ENCODE measurements at regions of chr12 and their contacts with region 1.

Region 1: GRCh38 chr12:104958009-104958945 is at the start of gene SLC41A2:
- DNase-seq: peak; percentile 81
- H3K4me3 ChIP-seq: peak within 1 kb of the TSS; percentile 72 to 89 (median 78)
- H3K27ac ChIP-seq: peak within 1 kb of the TSS; percentile 72
- H3K4me1 ChIP-seq: peaks cover 21% of the 10 kb centered on the region
- H3K27me3 ChIP-seq: peaks cover 0 to 5% of the 10 kb centered on the region in 2 experiments
- CTCF ChIP-seq: no peak
- POLR2A ChIP-seq: peak; percentile 51
- total RNA-seq, gene SLC41A2: 7.5 and 8.0 TPM in 2 replicates

Region 2: GRCh38 chr12:104371043-104371870 is 587.0 kb before region 1 on chr12:
- CTCF ChIA-PET with region 1: no interaction called
- POLR2A ChIA-PET with region 1: no interaction called
- dilution Hi-C with region 1: no loop called
- intact Hi-C with region 1: loop called (anchors 5 kb)
- DNase-seq: peak; percentile 62
- H3K4me3 ChIP-seq: no peak overlapping the region
- H3K27ac ChIP-seq: peak overlapping the region; percentile 73
- H3K4me1 ChIP-seq: peaks cover 20% of the 10 kb centered on the region
- H3K27me3 ChIP-seq: no peaks in the 10 kb centered on the region
- CTCF ChIP-seq: no peak
- POLR2A ChIP-seq: peak; percentile 41

Region 3: DNA sequence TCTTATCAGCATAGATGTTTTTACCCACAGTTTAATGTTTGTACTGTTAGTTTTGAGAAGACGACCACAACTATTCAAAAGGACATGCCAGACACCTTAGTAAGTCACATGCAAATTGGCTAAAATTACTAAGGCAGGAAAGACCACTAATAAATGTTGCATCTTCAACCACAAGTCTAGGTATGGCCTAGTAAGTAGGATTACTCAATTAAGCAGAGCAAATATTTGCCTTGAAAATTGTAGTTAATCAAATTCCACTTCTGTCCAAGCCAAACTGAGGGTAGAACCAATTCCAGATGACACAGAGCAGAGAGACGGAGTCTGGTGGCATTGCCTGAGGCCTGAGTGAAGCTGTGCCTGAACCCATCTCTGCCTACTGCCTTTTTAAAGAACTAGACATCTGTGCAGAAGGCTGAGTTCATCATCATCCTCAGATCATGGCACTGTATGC is 531.2 kb before region 1 on chr12:
- CTCF ChIA-PET with region 1: no interaction called
- POLR2A ChIA-PET with region 1: no interaction called
- dilution Hi-C with region 1: no loop called
- intact Hi-C with region 1: no loop called
- DNase-seq: no peak
- H3K4me3 ChIP-seq: no peak overlapping the region
- H3K27ac ChIP-seq: no peak overlapping the region
- H3K4me1 ChIP-seq: no peaks in the 10 kb centered on the region
- H3K27me3 ChIP-seq: no peaks in the 10 kb centered on the region
- CTCF ChIP-seq: no peak
- POLR2A ChIP-seq: no peak

Region 4: GRCh38 chr12:104695453-104696148 is 262.7 kb before region 1 on chr12:
- CTCF ChIA-PET with region 1: no interaction called
- POLR2A ChIA-PET with region 1: no interaction called
- dilution Hi-C with region 1: no loop called
- intact Hi-C with region 1: no loop called
- DNase-seq: peak; percentile 65
- H3K4me3 ChIP-seq: no peak overlapping the region
- H3K27ac ChIP-seq: peak overlapping the region; percentile 15
- H3K4me1 ChIP-seq: peaks cover 10% of the 10 kb centered on the region
- H3K27me3 ChIP-seq: no peaks in the 10 kb centered on the region
- CTCF ChIP-seq: no peak
- POLR2A ChIP-seq: no peak

Region 5: DNA sequence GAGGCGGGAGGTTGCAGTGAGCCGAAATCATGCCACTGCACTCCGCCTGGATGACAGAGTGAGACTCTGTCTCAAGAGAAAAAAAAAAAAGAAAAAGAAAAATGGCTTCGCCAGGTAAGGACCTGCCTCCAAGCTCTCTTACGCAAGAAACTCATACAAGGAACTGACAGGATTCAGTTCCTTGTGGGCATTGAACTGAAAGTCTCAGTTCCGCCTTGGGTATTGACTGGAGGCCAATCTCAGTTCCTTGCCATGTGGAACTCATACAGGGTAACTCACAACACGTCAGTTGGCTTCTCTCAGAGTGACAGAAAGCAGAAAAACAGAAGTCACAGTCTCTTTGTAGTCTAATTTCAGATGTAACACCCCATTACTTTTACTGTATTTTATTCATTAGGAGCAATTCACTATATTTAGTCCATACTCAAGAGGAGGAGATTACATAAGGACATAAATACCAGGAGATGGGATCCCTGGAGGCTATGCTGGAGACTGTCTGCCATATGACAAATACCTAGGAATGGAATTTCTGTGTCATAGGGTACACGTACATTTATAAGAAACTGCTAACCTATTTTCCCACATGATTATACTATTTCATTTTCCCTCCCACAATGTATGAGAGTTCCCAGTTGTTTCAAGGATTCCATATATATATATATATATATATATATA is 16.5 kb after region 1 on chr12:
- CTCF ChIA-PET with region 1: interaction called, 17 read pairs
- POLR2A ChIA-PET with region 1: no interaction called
- dilution Hi-C with region 1: no loop called
- intact Hi-C with region 1: no loop called
- DNase-seq: no peak
- H3K4me3 ChIP-seq: no peak overlapping the region
- H3K27ac ChIP-seq: no peak overlapping the region
- H3K4me1 ChIP-seq: no peaks in the 10 kb centered on the region
- H3K27me3 ChIP-seq: peaks cover 0 to 3% of the 10 kb centered on the region in 2 experiments
- CTCF ChIP-seq: no peak
- POLR2A ChIP-seq: no peak

Region 6: GRCh38 chr12:104986022-104986941 is 28.0 kb after region 1 on chr12 and contains the start of gene NOPCHAP1:
- CTCF ChIA-PET with region 1: interaction called, 4 read pairs
- POLR2A ChIA-PET with region 1: no interaction called
- dilution Hi-C with region 1: no loop called
- intact Hi-C with region 1: loop called (anchors 2 kb)
- DNase-seq: peak; percentile 92
- H3K4me3 ChIP-seq: peak within 1 kb of the TSS; percentile 31 to 72 (median 50)
- H3K27ac ChIP-seq: no peak within 1 kb of the TSS
- H3K4me1 ChIP-seq: peaks cover 12% of the 10 kb centered on the region
- H3K27me3 ChIP-seq: no peaks in the 10 kb centered on the region
- CTCF ChIP-seq: no peak
- POLR2A ChIP-seq: peak; percentile 95
- total RNA-seq, gene NOPCHAP1: 17.8 and 18.2 TPM in 2 replicates

Region 7: DNA sequence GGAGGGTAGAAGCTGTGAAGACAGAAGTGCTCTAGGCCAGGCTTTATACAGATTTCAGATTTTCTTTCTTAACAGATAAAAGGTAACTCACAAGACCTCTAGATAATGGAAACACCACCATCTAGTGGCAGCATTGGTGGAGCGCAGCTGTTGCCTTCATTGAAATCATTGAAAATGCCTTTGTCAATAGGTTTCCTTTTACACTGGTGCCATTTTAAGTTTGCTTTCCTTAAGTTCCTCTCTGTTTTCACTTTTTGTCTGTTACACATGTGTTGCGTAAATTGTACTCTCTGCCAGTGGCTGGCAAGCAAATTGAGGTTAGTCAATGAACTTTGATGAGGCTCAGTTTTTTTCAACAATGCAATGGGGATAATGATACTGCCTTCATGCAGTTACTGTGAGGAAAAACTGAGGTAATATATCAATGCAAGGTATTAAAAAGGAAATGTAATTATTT is 94.9 kb after region 1 on chr12:
- CTCF ChIA-PET with region 1: interaction called, 4 read pairs
- POLR2A ChIA-PET with region 1: no interaction called
- dilution Hi-C with region 1: no loop called
- intact Hi-C with region 1: loop called (anchors 5 kb)
- DNase-seq: peak; percentile 86
- H3K4me3 ChIP-seq: no peak overlapping the region
- H3K27ac ChIP-seq: no peak overlapping the region
- H3K4me1 ChIP-seq: no peaks in the 10 kb centered on the region
- H3K27me3 ChIP-seq: no peaks in the 10 kb centered on the region
- CTCF ChIP-seq: peak; percentile 80 to 81
- POLR2A ChIP-seq: no peak

Region 8: DNA sequence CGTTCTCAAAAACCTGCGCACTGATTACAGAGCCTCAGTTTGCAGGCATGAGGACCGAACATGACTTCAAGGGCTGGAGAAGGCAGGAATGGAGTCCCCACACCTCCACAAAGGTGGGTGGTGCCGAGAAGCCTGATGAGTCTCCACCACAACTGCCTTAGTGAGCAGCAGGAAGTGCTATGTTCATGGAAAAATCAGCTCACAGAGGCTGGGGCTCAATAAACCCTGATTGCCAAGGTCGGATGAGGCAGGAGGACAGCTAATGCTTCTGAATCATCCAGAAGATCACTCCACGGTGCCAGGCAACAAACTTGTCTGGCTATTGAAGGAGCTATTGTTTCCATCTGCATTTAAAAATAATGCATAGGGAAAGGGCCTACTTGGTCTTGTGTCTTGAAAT is 246.6 kb after region 1 on chr12:
- CTCF ChIA-PET with region 1: no interaction called
- POLR2A ChIA-PET with region 1: no interaction called
- dilution Hi-C with region 1: no loop called
- intact Hi-C with region 1: no loop called
- DNase-seq: peak; percentile 58
- H3K4me3 ChIP-seq: no peak overlapping the region
- H3K27ac ChIP-seq: no peak overlapping the region
- H3K4me1 ChIP-seq: no peaks in the 10 kb centered on the region
- H3K27me3 ChIP-seq: no peaks in the 10 kb centered on the region
- CTCF ChIP-seq: no peak
- POLR2A ChIP-seq: no peak

Region 9: GRCh38 chr12:105569886-105570285 is 611.6 kb after region 1 on chr12:
- CTCF ChIA-PET with region 1: no interaction called
- POLR2A ChIA-PET with region 1: no interaction called
- dilution Hi-C with region 1: no loop called
- intact Hi-C with region 1: no loop called
- DNase-seq: no peak
- H3K4me3 ChIP-seq: no peak overlapping the region
- H3K27ac ChIP-seq: no peak overlapping the region
- H3K4me1 ChIP-seq: peaks cover 2% of the 10 kb centered on the region
- H3K27me3 ChIP-seq: no peaks in the 10 kb centered on the region
- CTCF ChIP-seq: no peak
- POLR2A ChIP-seq: no peak